B cell (primary cell): ENCODE measurements at regions of chr5 and their contacts with region 1.

Region 1: DNA sequence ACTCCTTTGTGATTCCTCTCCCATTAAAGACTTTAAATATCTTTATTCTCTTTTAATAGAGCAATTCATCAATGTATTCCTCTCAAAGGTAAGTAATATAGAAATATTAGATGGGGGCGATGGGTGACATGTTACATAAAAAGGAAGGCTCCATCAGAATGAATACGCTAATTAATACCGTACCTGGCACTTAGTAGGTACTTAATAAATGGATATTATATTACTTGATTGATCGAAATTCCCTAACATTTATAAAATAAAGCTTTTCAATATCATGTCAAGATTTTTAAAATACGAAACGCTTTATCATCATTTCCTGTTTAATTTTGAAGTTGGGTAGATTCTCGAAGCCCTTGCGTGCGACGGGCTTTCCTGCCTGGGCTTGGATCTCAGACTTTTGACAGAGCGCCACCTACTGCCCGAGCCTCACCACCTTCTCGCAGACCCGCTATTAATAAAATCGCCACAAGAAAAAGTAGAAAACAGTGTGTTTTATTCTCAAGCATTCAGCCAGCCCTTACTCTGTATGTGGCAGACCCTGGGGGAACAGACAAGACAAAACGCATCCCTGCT is 99.4 kb downstream of the C5orf15 start:
- DNase-seq: peak; percentile 86
- ATAC-seq: peak; percentile 92
- H3K4me3 ChIP-seq: no peak overlapping the region
- H3K4me3 Mint-ChIP-seq: no peak overlapping the region
- H3K27ac ChIP-seq: no peak overlapping the region
- H3K27ac Mint-ChIP-seq: peak overlapping the region; percentile 12
- H3K4me1 ChIP-seq: peaks cover 24 to 37% of the 10 kb centered on the region in 2 donors
- H3K4me1 Mint-ChIP-seq: peaks cover 15% of the 10 kb centered on the region
- H3K27me3 ChIP-seq: no peaks in the 10 kb centered on the region
- H3K27me3 Mint-ChIP-seq: no peaks in the 10 kb centered on the region
- CTCF ChIP-seq: peak; percentile 90

Region 2: GRCh38 chr5:132369474-132370180 is 1499.4 kb before region 1 on chr5 and contains the start of gene SLC22A5:
- CTCF ChIA-PET with region 1: no interaction called
- POLR2A ChIA-PET with region 1: no interaction called
- intact Hi-C with region 1: no loop called
- DNase-seq: peak; percentile 88
- ATAC-seq: peak; percentile 93
- H3K4me3 ChIP-seq: peak within 1 kb of the TSS in 4 of 5 experiments; percentile 52 to 77 (median 68)
- H3K4me3 Mint-ChIP-seq: peak within 1 kb of the TSS; percentile 87
- H3K27ac ChIP-seq: peak within 1 kb of the TSS; percentile 73 to 82
- H3K27ac Mint-ChIP-seq: peak within 1 kb of the TSS; percentile 81
- H3K4me1 ChIP-seq: peaks cover 10 to 15% of the 10 kb centered on the region in 2 donors
- H3K4me1 Mint-ChIP-seq: peaks cover 19% of the 10 kb centered on the region
- H3K27me3 ChIP-seq: no peaks in the 10 kb centered on the region
- H3K27me3 Mint-ChIP-seq: no peaks in the 10 kb centered on the region
- CTCF ChIP-seq: no peak
- total RNA-seq, gene SLC22A5: 12.9 and 13.2 TPM in 2 replicates

Region 3: GRCh38 chr5:133111299-133111698 is 757.7 kb before region 1 on chr5:
- CTCF ChIA-PET with region 1: interaction called, 16 read pairs
- POLR2A ChIA-PET with region 1: interaction called, 5 read pairs
- intact Hi-C with region 1: no loop called
- DNase-seq: peak; percentile 88
- ATAC-seq: peak; percentile 60
- H3K4me3 ChIP-seq: no peak overlapping the region
- H3K4me3 Mint-ChIP-seq: no peak overlapping the region
- H3K27ac ChIP-seq: no peak overlapping the region
- H3K27ac Mint-ChIP-seq: peak overlapping the region; percentile 0
- H3K4me1 ChIP-seq: peaks cover 37 to 39% of the 10 kb centered on the region in 2 donors
- H3K4me1 Mint-ChIP-seq: peaks cover 59% of the 10 kb centered on the region
- H3K27me3 ChIP-seq: no peaks in the 10 kb centered on the region
- H3K27me3 Mint-ChIP-seq: no peaks in the 10 kb centered on the region
- CTCF ChIP-seq: peak; percentile 97

Region 4: DNA sequence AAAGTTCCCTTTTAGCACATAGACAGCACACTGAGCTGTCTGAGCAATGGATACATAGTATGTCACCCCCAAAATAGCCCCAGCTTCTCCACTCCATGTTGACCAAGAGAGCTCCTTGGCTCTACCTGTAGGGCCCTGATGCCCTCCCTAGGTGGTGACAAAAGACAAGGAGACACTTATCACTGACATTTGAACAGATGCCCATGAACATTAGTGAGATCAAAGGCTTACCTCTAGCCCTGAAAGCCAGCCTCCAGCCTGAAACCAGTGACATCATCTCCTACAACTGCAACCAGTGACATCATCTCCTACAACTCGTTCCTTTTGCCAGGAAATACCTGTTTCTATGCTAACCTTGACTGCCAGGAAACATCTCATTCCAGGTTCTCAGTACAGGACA is 379.4 kb before region 1 on chr5:
- CTCF ChIA-PET with region 1: interaction called, 5 read pairs
- POLR2A ChIA-PET with region 1: no interaction called
- intact Hi-C with region 1: loop called (anchors 5 kb)
- DNase-seq: peak; percentile 36
- ATAC-seq: peak; percentile 28
- H3K4me3 ChIP-seq: no peak overlapping the region
- H3K4me3 Mint-ChIP-seq: no peak overlapping the region
- H3K27ac ChIP-seq: no peak overlapping the region
- H3K27ac Mint-ChIP-seq: no peak overlapping the region
- H3K4me1 ChIP-seq: no peaks in the 10 kb centered on the region
- H3K4me1 Mint-ChIP-seq: no peaks in the 10 kb centered on the region
- H3K27me3 ChIP-seq: no peaks in the 10 kb centered on the region
- H3K27me3 Mint-ChIP-seq: peaks cover 4% of the 10 kb centered on the region
- CTCF ChIP-seq: peak; percentile 14

Region 5: DNA sequence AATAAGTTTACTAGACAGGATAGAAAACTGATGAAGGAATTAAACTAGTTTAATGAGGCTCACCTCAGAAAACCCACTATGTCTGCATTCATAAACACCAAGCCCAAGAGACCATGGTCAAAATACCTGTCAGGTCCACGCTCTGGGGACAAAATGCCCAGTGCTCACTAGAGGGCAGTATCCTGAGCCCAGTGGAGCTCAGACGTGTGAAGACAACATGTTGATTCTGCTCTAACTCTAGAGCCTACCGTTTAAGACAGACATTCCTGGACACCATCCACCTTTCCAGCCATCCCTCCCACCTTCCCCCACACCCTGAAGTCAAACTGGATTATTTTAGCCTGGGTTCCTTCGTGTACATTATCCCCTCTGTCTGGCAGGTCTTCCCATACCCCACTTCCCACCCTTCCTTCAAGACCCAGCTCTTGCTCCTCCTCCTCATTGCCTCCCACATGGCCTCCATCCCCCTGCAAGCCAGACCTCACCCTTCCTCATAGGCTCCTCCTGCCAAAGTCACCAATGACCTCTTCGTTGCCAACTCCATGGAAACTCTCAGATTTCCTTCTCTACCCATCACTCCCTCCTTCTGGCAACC is 114.4 kb before region 1 on chr5:
- CTCF ChIA-PET with region 1: interaction called, 19 read pairs
- POLR2A ChIA-PET with region 1: no interaction called
- intact Hi-C with region 1: loop called (anchors 10 kb)
- DNase-seq: peak; percentile 54
- ATAC-seq: peak; percentile 43
- H3K4me3 ChIP-seq: no peak overlapping the region
- H3K4me3 Mint-ChIP-seq: no peak overlapping the region
- H3K27ac ChIP-seq: no peak overlapping the region
- H3K27ac Mint-ChIP-seq: peak overlapping the region; percentile 66
- H3K4me1 ChIP-seq: no peaks in the 10 kb centered on the region
- H3K4me1 Mint-ChIP-seq: peaks cover 5% of the 10 kb centered on the region
- H3K27me3 ChIP-seq: peaks cover 0 to 4% (median 1%) of the 10 kb centered on the region in 4 experiments
- H3K27me3 Mint-ChIP-seq: peaks cover 21% of the 10 kb centered on the region
- CTCF ChIP-seq: peak; percentile 59

Region 6: DNA sequence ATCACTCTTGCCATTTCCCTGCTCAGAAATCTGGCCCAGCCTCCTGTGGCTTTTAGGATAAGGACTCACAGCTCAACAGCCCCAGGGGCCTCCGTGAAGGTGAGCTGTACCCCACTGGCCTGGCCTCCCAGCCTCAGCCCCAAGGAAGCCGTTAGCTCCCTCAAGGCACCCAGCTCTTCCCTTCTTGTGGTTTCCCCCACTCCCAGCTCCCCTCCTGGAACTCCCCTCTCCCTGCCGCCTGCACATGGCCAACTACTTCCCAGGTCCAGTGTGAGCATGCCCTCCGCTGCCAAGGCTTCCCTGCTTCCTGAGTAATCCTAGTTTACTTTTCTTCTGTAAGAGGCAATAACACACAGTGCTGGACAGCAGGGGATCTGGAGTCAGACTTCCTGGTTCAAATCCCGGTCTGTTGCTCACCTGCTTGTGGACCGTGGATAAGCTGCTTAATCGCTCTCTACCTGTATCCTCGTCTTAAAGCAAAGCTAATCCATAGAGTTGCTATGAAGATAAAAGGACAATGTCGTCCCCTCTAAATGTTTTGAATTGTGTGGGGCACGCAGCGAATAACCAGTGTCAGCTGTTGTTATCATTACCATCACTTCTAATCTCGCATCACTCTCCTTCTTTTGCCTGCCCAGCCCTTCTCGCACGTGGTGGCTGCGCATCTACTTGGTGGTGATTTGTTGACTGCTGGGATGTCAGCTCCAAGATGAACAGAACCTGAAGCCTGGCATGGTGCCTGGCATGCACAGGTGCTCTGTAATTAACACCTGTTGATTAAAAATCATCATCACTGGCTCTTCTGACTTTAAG is 12.8 kb after region 1 on chr5:
- CTCF ChIA-PET with region 1: interaction called, 32 read pairs
- POLR2A ChIA-PET with region 1: no interaction called
- intact Hi-C with region 1: no loop called
- DNase-seq: no peak
- ATAC-seq: no peak
- H3K4me3 ChIP-seq: no peak overlapping the region
- H3K4me3 Mint-ChIP-seq: no peak overlapping the region
- H3K27ac ChIP-seq: no peak overlapping the region
- H3K27ac Mint-ChIP-seq: no peak overlapping the region
- H3K4me1 ChIP-seq: peaks cover 21 to 30% of the 10 kb centered on the region in 2 donors
- H3K4me1 Mint-ChIP-seq: peaks cover 31% of the 10 kb centered on the region
- H3K27me3 ChIP-seq: no peaks in the 10 kb centered on the region
- H3K27me3 Mint-ChIP-seq: no peaks in the 10 kb centered on the region
- CTCF ChIP-seq: no peak

Region 7: DNA sequence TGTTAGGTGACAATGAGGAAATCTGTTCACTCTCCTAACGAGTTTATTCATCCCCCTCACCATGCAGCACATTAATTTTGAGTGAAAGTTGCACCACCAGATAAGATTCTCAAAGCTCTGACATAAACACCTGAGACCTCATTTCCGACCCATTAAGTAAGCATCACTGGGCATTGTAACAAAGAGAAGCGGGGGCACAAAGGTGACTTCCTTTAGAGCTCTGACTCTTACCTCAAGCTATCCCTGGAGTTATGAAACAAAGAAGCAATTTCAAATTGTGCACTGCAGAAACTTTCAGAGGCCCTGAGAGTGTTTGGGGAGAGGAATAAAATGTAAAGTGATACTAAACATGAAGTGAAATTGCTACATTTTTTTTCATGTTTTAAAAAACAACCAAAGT is 69.9 kb after region 1 on chr5:
- CTCF ChIA-PET with region 1: interaction called, 20 read pairs
- POLR2A ChIA-PET with region 1: no interaction called
- intact Hi-C with region 1: loop called (anchors 1 kb)
- DNase-seq: peak; percentile 67
- ATAC-seq: no peak
- H3K4me3 ChIP-seq: peak overlapping the region in 1 of 5 experiments; percentile 22
- H3K4me3 Mint-ChIP-seq: peak overlapping the region; percentile 30
- H3K27ac ChIP-seq: peak overlapping the region; percentile 93 to 99
- H3K27ac Mint-ChIP-seq: peak overlapping the region; percentile 99
- H3K4me1 ChIP-seq: peaks cover 84 to 96% of the 10 kb centered on the region in 2 donors
- H3K4me1 Mint-ChIP-seq: peaks cover 83% of the 10 kb centered on the region
- H3K27me3 ChIP-seq: no peaks in the 10 kb centered on the region
- H3K27me3 Mint-ChIP-seq: no peaks in the 10 kb centered on the region
- CTCF ChIP-seq: no peak